Left cardiac atrium (tissue), 4 donors: ENCODE measurements at regions of chr12 and their contacts with region 1.

Region 1: DNA sequence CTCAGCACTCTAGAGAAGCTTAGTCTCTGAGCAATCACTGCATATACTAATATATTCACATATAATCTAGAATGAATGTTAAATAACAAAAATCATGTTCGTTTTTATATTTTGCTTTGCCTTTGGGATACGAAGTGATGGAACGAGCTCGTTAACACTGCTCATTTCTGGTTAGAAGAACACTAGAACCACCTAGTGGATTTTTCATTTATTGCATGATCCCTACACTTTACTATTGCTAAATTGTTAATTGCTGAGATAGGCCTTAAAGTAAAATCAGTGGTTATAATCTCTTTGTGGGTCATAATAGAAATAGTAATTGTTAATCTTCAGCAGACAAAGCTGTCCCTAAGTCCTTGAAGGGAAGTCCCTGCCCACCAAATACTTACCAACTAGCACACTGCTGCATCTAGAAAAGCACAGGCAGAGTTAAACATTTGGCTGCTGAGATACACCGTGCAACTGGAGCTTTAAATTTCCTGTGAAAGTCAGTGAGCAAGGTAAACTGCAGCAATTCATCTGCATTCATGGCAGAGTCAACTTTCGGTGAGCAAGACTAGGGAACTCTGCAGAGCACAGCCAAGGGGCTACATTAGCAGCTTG is 353.7 kb downstream of the APAF1 start:
- DNase-seq: no peak
- ATAC-seq: peak; percentile 71 to 73

Region 2: GRCh38 chr12:98397316-98398105 is 601.3 kb before region 1 on chr12:
- intact Hi-C with region 1: no loop called
- DNase-seq: peak; percentile 83
- ATAC-seq: peak; percentile 96 to 98

Region 3: DNA sequence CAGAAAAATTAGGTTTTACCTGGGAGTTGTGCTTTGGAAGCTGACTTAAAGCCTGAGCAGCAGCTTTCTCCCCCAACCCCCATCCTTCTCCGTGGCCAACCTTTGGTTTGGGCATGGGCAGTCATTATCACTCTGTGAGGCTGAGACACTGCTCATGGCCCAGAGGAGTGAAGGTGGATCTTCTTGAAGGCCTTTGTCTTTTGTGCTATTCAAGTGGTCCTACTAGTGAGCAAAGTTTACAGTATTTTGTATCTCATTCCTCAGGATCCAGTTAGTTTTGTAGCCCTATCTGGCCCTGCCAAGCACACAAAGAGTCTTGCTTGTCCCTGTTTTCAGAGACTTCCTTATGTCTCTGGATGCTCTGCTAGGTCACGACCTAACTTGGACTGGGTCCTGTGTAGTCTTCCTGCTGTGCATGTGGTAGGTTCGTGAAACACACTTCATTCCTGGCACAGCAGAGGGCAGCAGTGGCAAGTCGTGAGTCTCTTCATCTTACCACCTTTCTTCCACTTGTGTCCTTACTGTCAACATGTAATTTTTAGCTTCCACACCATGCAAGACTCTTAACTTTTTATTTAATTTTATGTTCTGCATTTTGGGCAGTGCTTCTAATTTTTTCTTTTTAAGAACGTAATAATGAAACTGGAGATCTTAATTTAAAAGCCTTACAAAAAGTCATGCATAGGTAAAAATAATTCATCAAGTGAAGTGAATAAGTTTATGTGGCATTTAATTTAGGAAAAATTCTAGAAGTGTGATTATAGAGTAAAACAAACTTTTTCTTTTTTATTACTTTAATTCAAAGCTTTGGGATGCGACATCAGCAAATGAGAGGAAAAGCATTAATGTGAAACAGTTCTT is 300.0 kb before region 1 on chr12:
- intact Hi-C with region 1: loop called (anchors 1 to 10 kb)
- DNase-seq: peak; percentile 46
- ATAC-seq: peak; percentile 93 to 95

Region 4: GRCh38 chr12:99147130-99147529 is 148.3 kb after region 1 on chr12:
- intact Hi-C with region 1: no loop called
- DNase-seq: no peak
- ATAC-seq: peak in 1 of 2 donors; percentile 49

Region 5: DNA sequence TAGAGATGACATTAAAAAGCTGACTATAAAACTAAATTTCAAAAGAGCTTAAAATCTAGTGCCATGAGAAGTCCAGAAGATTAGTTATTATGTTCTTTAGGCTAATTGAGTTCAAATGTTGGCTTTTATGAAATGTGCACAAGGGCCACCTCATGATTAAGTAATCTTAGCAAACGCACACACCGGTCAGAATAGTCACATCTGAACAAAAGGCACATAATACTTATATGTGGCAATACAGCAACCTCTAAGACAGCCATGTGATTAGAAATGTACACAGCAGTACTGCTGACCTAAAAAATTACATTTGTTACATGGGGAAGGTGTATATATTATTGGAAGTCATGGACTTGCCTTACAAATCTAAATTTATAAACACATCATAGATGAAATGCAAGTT is 304.1 kb after region 1 on chr12:
- intact Hi-C with region 1: no loop called
- DNase-seq: no peak
- ATAC-seq: no peak